ENCODE measurements at regions of chr19 and their contacts with region 1.

Region 1: DNA sequence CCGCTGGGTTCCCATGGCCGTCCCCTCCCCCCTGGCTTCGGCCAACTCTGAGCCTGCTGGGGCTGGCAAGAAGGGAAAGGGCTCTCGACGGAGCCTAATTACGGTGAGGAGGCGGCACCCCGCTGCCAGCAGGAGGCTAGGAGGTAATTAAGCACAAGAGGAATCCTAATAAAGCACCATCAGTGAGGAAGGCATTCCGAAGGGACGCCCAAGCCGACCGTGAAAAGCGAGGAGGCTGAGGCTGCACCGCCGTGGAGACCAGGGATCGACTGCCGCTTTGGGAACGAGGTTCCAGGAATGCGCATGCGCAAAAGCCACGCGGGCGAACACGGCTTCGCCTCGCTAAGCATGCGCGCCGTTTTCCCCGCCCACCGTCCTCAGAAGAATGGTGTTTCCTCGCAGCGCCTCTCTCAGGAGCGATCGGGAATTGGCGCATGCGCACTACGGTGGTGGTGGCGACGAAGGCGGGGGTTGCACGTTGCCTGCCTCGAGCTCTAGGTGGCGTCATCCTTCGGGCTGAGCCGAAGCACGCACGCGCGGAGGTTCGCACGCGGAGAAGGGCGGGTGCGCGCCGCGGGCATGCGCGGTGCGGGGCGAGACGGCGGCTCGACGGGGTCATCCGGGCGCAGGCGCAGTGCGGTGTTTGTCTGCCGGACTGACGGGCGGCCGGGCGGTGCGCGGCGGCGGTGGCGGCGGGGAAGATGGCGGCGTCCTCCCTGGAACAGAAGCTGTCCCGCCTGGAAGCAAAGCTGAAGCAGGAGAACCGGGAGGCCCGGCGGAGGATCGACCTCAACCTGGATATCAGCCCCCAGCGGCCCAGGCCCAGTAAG is at the start of gene MAP2K7:
- DNase-seq: peak; percentile 100
- ATAC-seq: peak; percentile 83 to 85
- H3K4me3 Mint-ChIP-seq: peak within 1 kb of the TSS; percentile 84 to 95 (median 90)
- H3K27ac Mint-ChIP-seq: peak within 1 kb of the TSS; percentile 91 to 99 (median 96)
- H3K4me1 Mint-ChIP-seq: peaks cover 16 to 46% (median 42%) of the 10 kb centered on the region in 4 donors
- H3K27me3 Mint-ChIP-seq: peaks cover 0 to 6% (median 0%) of the 10 kb centered on the region in 5 donors
- polyA plus RNA-seq, gene MAP2K7: 1.8 to 5.1 (median 2.3) TPM

Region 2: DNA sequence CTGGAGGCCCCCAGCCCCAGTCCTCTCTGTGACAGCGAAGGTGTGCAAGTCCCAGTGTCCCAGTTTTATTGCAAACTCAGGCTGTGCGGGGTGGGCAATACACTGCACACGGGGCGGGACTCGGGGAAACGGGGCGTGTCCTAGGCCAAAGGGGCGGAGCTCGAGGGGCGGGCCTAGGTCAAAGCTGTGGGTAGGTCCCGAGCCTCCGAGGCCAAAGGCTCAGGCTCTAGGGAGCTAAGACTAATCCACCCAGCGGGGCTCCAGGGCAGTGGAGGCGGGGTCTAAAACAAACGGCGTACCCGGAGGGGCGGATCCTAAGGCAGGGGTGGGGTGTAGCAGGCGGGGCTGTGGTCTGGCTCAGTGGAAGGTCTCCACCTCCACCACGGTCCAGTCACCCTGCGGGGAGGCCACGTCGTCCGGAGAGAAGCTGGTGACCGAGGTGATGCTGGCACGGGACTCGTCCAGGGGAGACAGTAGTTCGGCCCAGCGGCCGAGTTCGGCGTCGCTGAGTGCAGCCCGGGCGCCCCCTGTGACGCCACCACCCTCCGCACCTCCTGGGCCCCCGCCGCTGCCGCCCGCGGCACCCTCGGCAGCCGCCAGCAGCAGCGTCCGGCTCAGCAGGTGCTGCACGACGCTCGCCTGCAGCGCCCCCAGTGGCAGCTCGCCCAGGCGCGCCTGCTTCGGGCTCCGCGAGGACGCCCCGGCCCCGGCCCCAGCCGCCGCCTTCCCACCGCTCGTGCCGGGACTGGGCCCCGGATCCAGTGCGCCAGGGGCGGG is 34.6 kb before region 1 on chr19:
- POLR2A ChIA-PET with region 1: interaction called, 17 read pairs
- DNase-seq: peak in 9 of 10 donors; percentile 76 to 94 (median 89)
- ATAC-seq: peak; percentile 77 to 79
- H3K4me3 Mint-ChIP-seq: peak overlapping the region; percentile 73 to 91 (median 83)
- H3K27ac Mint-ChIP-seq: peak overlapping the region in 9 of 10 donors; percentile 48 to 93 (median 85)
- H3K4me1 Mint-ChIP-seq: peaks cover 30 to 60% (median 46%) of the 10 kb centered on the region in 4 donors
- H3K27me3 Mint-ChIP-seq: peaks cover 0 to 26% (median 13%) of the 10 kb centered on the region in 5 donors